ENCODE measurements at regions of chr14 and their contacts with region 1.

Region 1: DNA sequence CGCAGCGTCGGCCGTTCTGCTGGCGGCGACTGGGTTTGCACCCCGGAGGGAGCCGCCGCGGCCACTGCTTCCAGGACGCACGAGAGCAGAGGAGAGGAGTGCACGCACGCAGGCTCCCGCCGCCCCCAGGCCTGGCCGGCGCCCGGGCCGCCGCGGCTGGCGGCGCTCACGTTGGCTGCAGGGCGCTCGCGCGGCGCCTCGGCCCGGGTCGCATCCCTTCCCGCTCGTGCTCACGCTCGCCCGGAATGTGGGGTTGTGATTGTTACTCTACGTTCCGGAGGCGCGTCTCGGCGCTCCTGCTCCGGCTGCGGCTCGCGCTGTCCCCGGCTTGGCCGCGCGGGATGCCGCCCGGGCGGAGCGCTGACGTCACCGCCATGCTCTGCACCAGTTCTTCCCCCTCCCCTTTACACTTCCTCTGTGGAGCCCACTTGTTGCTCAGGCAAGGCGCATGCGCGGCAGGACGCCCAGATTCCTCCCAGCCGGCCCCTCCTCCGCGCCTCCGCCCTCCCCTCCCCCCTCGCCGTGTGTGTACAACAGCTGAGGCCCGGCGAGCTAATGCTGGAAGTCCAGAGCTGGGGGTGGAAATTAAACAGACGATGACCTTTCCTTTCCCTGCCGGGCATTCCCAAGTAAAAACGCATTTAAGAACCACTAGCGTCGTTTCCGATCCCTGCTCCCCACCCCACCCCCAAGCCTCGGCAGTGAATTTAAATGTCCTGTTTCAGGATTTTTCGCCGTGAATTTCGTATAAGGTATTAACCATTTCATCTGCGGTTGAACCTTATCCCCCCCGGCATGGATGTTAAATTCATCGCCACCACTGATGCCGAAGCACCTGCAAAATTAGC is at the start of gene IRF2BPL:
- DNase-seq: peak; percentile 99
- H3K4me3 ChIP-seq: peak within 1 kb of the TSS; percentile 94
- H3K27ac ChIP-seq: peak within 1 kb of the TSS; percentile 99
- H3K27me3 ChIP-seq: no peaks in the 10 kb centered on the region
- CTCF ChIP-seq: no peak
- polyA plus RNA-seq, gene IRF2BPL: 17.1 and 21.8 TPM in 2 replicates

Region 2: DNA sequence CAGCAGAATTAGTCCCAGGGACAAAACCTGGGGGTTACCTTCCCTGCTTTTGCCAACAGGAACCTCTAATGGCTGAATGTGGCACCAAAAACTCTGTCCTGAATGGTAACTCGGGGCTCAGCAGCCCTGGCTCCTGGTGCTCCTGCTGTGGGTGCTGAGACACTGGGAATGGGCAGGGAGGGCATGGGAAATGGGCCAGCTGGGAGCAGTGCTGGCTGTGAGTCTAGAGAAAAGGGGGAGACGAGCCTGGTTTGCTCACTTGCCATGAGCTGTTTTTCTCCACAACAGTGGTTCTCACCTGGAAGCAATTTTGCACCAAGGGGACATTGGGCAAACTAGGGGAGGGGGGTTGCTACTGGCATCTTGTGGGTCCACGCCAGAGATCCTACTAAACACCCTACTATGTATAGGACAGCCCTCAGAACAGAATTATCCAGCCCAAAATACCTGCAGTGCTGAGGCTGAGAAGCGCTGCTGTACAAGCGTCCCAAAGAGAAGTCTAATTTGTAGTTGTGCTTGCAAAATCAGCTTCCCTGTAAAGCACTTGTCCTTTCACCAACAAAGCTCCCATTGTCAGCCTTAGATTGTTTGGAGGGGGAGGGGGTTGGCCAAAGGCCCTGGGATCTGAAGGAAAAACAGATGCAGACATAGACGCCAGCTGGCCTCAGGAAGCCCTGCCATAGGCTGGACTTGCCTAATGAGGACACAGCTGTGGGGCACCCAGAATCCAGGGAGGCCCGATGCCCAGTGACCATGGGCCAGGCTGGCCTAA is 198.8 kb before region 1 on chr14:
- CTCF ChIA-PET with region 1: no interaction called
- POLR2A ChIA-PET with region 1: no interaction called
- DNase-seq: no peak
- H3K4me3 ChIP-seq: no peak overlapping the region
- H3K27ac ChIP-seq: no peak overlapping the region
- H3K27me3 ChIP-seq: peaks cover 33% of the 10 kb centered on the region
- CTCF ChIP-seq: no peak

Region 3: GRCh38 chr14:76904740-76905438 is 123.7 kb before region 1 on chr14:
- CTCF ChIA-PET with region 1: interaction called, 3 read pairs
- POLR2A ChIA-PET with region 1: interaction called, 11 read pairs
- DNase-seq: peak; percentile 92
- H3K4me3 ChIP-seq: peak overlapping the region; percentile 42
- H3K27ac ChIP-seq: peak overlapping the region; percentile 99
- H3K27me3 ChIP-seq: no peaks in the 10 kb centered on the region
- CTCF ChIP-seq: no peak

Region 4: GRCh38 chr14:76910371-76910890 is 118.2 kb before region 1 on chr14:
- CTCF ChIA-PET with region 1: interaction called, 156 read pairs
- POLR2A ChIA-PET with region 1: interaction called, 12 read pairs
- DNase-seq: no peak
- H3K4me3 ChIP-seq: no peak overlapping the region
- H3K27ac ChIP-seq: no peak overlapping the region
- H3K27me3 ChIP-seq: no peaks in the 10 kb centered on the region
- CTCF ChIP-seq: no peak

Region 5: GRCh38 chr14:77014004-77014604 is 14.5 kb before region 1 on chr14:
- CTCF ChIA-PET with region 1: no interaction called
- POLR2A ChIA-PET with region 1: no interaction called
- DNase-seq: no peak
- H3K4me3 ChIP-seq: no peak overlapping the region
- H3K27ac ChIP-seq: no peak overlapping the region
- H3K27me3 ChIP-seq: peaks cover 5% of the 10 kb centered on the region
- CTCF ChIP-seq: no peak

Region 6: DNA sequence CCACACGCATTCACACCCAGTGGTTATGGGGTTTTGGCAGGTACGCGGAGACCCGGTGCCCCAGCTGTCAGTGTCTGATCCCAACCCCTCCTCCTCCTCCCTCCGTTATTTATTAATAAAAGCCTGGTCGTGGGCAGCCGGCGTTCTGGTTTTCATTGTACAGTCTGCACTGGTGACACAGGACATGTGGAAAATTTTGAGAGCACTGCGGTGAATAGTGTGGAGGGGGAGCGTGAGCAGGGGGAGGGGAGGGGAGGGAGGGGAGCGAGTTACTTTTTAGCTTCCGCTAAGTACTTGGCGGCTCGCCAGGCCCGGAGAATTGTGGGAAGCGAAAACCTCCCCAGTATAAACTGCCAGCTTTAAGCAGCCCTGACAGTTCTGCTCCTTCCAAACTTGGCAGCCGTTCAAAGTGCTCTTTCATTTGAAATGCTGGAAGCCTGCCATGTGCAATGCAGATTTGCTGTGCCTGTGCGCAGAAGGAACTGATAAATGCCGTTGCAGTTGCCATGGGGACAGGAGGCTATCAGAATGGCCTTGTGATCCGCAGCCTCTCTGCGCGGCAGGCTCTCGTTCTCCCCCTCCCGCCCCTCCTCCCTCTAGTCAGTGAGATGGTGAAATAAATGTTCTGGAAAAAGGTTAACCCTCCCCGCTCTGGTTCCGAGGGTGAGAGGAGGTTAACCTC is 11.6 kb after region 1 on chr14:
- CTCF ChIA-PET with region 1: interaction called, 4 read pairs
- POLR2A ChIA-PET with region 1: interaction called, 146 read pairs
- DNase-seq: peak; percentile 97
- H3K4me3 ChIP-seq: peak overlapping the region; percentile 51
- H3K27ac ChIP-seq: peak overlapping the region; percentile 99
- H3K27me3 ChIP-seq: no peaks in the 10 kb centered on the region
- CTCF ChIP-seq: no peak

Region 7: GRCh38 chr14:77053046-77053841 is 24.6 kb after region 1 on chr14:
- CTCF ChIA-PET with region 1: interaction called, 27 read pairs
- POLR2A ChIA-PET with region 1: interaction called, 3 read pairs
- DNase-seq: no peak
- H3K4me3 ChIP-seq: no peak overlapping the region
- H3K27ac ChIP-seq: peak overlapping the region; percentile 21
- H3K27me3 ChIP-seq: no peaks in the 10 kb centered on the region
- CTCF ChIP-seq: peak; percentile 89

Region 8: DNA sequence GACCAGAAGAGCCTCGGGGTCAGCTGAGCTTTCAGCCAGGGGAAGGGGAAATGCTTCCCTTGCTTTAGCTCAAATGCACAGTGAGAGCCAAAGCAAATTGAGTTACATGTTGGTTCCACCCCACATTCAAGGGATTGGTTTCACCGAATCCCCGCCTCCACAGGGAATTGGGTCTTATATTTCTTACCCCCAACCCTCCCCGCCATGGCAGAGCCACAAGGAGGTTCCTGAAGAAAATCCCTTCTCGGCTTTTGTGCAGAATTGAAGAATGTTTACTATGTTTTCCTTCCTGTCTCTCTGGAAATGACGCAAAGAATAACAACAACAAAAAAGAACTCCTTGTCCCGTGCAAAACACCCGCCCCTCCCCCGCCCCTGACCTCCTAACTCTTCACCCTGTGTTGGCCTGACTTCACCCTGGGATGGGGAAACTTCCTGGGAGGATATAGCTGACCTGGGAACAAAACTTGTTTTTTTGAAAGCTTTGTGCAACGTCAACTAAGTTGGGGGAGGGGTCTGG is 47.6 kb after region 1 on chr14:
- CTCF ChIA-PET with region 1: interaction called, 19 read pairs
- POLR2A ChIA-PET with region 1: interaction called, 3 read pairs
- DNase-seq: no peak
- H3K4me3 ChIP-seq: no peak overlapping the region
- H3K27ac ChIP-seq: no peak overlapping the region
- H3K27me3 ChIP-seq: no peaks in the 10 kb centered on the region
- CTCF ChIP-seq: no peak